Activated naive CD4-positive, alpha-beta T cell treated with anti-CD3 and anti-CD28 coated beads for 36 hours (primary cell): ENCODE measurements at regions of chr2 and their contacts with region 1.

Region 1: GRCh38 chr2:58261215-58261614 is 20.1 kb upstream of the FANCL start:
- DNase-seq: no peak
- H3K4me3 Mint-ChIP-seq: no peak overlapping the region
- H3K27ac Mint-ChIP-seq: no peak overlapping the region
- H3K4me1 Mint-ChIP-seq: peaks cover 6% of the 10 kb centered on the region
- H3K27me3 Mint-ChIP-seq: peaks cover 10% of the 10 kb centered on the region

Region 2: GRCh38 chr2:58107803-58108710 is 153.2 kb before region 1 on chr2:
- CTCF ChIA-PET with region 1: no interaction called
- intact Hi-C with region 1: loop called (anchors 1 kb)
- DNase-seq: no peak
- H3K4me3 Mint-ChIP-seq: no peak overlapping the region
- H3K27ac Mint-ChIP-seq: no peak overlapping the region
- H3K4me1 Mint-ChIP-seq: peaks cover 13% of the 10 kb centered on the region
- H3K27me3 Mint-ChIP-seq: no peaks in the 10 kb centered on the region

Region 3: GRCh38 chr2:58146707-58147106 is 114.5 kb before region 1 on chr2:
- CTCF ChIA-PET with region 1: interaction called, 4 read pairs
- intact Hi-C with region 1: loop called (anchors 5 kb)
- DNase-seq: peak; percentile 32
- H3K4me3 Mint-ChIP-seq: no peak overlapping the region
- H3K27ac Mint-ChIP-seq: no peak overlapping the region
- H3K4me1 Mint-ChIP-seq: peaks cover 9% of the 10 kb centered on the region
- H3K27me3 Mint-ChIP-seq: no peaks in the 10 kb centered on the region

Region 4: DNA sequence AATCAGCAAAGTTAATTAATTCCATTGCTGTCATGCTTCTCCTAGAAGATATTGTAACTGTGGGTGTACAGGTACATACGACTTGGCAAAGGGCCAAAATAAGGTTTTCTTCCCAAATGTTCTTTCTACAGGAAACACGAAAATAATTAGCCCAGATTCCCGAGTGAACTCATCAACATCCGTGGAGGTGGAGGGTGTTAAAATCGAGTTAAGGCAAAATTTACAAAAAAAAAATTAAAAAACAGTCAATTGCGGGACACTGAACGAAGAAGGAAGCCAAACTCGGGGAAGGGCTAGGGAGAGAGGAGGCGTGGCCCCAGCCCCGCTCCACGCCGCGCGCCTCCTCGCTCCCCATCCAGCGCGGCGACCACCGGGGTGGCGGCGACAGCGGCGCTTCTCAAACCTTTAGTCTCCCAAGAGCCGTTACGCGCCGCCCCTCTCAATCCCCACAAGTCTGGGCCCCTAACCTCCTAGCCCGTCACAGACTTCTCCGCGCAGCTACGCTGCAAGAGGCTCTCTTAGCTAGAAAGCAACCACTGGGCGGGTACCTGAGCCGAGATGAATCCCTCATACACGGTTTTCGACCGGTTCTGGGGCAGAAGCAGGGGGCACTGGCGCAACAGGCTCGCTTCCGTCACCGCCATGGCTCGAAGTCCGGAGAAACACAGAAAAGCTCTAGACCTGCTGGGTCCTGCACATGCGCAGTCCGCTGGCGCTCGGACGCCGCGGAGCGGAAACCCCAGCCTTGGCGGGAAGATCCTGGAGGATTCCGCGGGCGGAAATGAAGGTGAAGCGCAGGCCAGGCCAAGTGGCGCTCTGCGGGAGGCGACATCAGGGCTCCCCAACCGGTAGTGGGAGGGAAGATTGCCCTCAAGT is 20.3 kb before region 1 on chr2 and contains the start of gene FANCL:
- CTCF ChIA-PET with region 1: no interaction called
- intact Hi-C with region 1: loop called (anchors 1 kb)
- DNase-seq: peak; percentile 81
- H3K4me3 Mint-ChIP-seq: peak within 1 kb of the TSS; percentile 84
- H3K27ac Mint-ChIP-seq: peak within 1 kb of the TSS; percentile 82
- H3K4me1 Mint-ChIP-seq: peaks cover 26% of the 10 kb centered on the region
- H3K27me3 Mint-ChIP-seq: peaks cover 15% of the 10 kb centered on the region
- total RNA-seq, gene FANCL: 14.3 to 16.3 TPM

Region 5: DNA sequence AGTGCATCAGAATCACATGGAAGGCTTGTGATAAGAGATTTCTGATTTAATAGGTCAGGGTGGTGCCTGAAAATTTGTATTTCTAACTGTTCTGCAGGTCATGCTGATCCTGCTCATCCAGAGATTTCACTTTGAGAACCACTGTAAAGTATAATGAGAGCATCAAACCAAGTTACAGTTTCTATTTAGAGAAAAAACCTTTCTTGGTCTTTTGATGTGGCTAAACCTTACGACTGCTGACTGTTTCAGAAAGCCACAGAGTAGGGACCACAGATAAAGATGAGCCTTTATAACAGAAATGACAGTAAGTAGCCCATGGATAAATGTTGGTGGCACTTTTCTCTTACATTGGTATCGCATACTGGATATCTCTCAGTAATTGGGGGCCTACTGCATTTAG is 89.3 kb after region 1 on chr2:
- CTCF ChIA-PET with region 1: no interaction called
- intact Hi-C with region 1: loop called (anchors 5 kb)
- DNase-seq: no peak
- H3K4me3 Mint-ChIP-seq: no peak overlapping the region
- H3K27ac Mint-ChIP-seq: no peak overlapping the region
- H3K4me1 Mint-ChIP-seq: no peaks in the 10 kb centered on the region
- H3K27me3 Mint-ChIP-seq: peaks cover 21% of the 10 kb centered on the region

Region 6: DNA sequence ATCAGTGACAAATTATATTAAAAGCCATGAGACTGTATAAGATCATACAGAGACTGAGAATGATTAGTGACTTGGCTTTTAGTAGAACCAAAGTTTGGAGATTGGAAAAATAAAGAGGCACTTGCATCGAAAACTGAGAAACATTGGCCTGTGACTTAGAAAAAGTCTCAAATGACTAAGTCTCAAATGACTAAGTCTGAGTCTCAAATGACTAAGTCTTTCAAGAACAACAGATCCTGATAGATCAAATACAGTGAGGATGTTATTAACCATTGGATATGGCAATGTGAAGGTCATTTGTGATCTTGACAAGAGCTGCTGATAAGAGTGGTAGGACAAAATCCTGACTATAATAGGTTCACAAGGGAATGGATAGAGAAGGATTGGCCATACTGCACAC is 115.4 kb after region 1 on chr2:
- CTCF ChIA-PET with region 1: no interaction called
- intact Hi-C with region 1: loop called (anchors 1 kb)
- DNase-seq: no peak
- H3K4me3 Mint-ChIP-seq: no peak overlapping the region
- H3K27ac Mint-ChIP-seq: no peak overlapping the region
- H3K4me1 Mint-ChIP-seq: peaks cover 12% of the 10 kb centered on the region
- H3K27me3 Mint-ChIP-seq: peaks cover 2% of the 10 kb centered on the region

Region 7: DNA sequence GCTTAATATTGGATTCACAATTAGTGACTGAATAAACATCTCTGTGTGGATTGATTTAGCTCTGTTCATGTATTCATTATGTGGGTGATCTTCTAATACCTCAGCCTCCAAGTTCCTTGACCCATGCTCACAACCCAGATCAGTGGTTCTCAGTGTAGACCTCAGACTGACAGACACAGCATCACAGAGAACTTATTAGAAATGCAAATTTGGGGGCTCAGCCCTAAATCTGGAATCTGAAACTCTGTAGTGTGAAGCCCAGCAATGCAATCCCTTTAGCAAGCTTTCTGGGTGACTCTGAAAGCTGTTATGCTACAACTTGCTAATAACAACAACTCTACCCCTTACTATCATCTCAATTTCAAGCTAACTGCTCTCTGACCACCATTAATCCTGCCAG is 253.0 kb after region 1 on chr2:
- CTCF ChIA-PET with region 1: no interaction called
- intact Hi-C with region 1: loop called (anchors 10 kb)
- DNase-seq: no peak
- H3K4me3 Mint-ChIP-seq: no peak overlapping the region
- H3K27ac Mint-ChIP-seq: no peak overlapping the region
- H3K4me1 Mint-ChIP-seq: no peaks in the 10 kb centered on the region
- H3K27me3 Mint-ChIP-seq: peaks cover 2% of the 10 kb centered on the region